ENCODE measurements at regions of chr19 and their contacts with region 1.

Region 1: DNA sequence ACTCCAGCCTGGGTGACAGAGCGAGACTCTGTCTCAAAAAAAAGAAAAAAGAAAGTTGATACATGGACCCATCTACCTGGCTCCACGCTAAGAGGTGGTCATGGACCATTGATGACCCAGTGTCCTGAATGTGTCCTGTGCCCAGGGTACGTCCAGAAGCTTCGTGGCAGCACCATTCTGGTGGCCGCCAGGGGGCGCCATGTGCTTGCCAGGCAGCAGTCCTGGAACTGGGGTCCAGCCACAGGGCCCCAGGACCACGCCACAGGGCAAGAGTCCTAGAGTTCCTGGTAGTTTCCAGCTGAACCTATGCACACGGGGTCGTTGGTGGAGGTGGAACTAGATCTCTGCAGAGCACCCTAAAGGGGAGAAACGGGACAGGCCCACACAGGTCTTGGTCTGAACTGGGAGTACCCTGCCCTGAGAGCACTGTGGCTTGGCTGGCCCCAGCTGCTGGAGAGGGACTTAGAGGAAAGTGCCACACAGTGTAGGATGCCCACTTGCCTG is 19.9 kb upstream of the FBXO27 start:
- DNase-seq: peak; percentile 90
- ATAC-seq: peak; percentile 91
- H3K4me3 ChIP-seq: no peak overlapping the region
- H3K27ac ChIP-seq: peak overlapping the region; percentile 4; the same call in 1 of the 2 replicates
- H3K4me1 ChIP-seq: no peaks in the 10 kb centered on the region
- H3K27me3 ChIP-seq: no peaks in the 10 kb centered on the region
- CTCF ChIP-seq: no peak

Region 2: DNA sequence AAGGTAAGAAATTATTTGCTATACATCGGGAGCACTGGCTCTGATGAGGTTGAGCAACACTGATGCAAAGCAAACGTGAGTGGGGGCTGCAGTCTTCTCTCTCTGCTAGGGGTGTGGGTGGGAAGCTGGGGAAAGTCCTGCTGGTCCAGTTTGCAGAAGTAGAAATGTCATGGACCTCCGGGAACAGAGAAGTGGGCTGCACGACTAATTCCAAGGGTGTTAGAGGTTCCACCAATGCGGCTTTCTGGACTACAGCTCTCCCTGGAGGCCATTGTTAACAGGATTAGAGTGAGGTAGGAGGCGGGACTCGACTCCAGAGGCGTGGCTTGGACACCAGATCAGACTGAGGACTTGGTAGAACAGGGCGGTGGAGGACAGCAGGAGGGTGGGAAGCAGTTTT is 14.2 kb before region 1 on chr19:
- CTCF ChIA-PET with region 1: interaction called, 21 read pairs
- POLR2A ChIA-PET with region 1: interaction called, 3 read pairs
- in situ Hi-C with region 1: no loop called
- intact Hi-C with region 1: no loop called
- DNase-seq: no peak
- ATAC-seq: peak; percentile 96
- H3K4me3 ChIP-seq: peak overlapping the region in 1 of 2 experiments; percentile 5; a peak in 2 of 4 replicates
- H3K27ac ChIP-seq: peak overlapping the region; percentile 3; the same call in 1 of the 2 replicates
- H3K4me1 ChIP-seq: peaks cover 11% of the 10 kb centered on the region
- H3K27me3 ChIP-seq: no peaks in the 10 kb centered on the region
- CTCF ChIP-seq: no peak

Region 3: GRCh38 chr19:39070888-39071287 is 18.6 kb after region 1 on chr19:
- CTCF ChIA-PET with region 1: interaction called, 15 read pairs
- POLR2A ChIA-PET with region 1: interaction called, 4 read pairs
- in situ Hi-C with region 1: no loop called
- intact Hi-C with region 1: no loop called
- DNase-seq: no peak
- ATAC-seq: peak; percentile 37
- H3K4me3 ChIP-seq: no peak overlapping the region
- H3K27ac ChIP-seq: peak overlapping the region; percentile 24
- H3K4me1 ChIP-seq: peaks cover 32% of the 10 kb centered on the region
- H3K27me3 ChIP-seq: no peaks in the 10 kb centered on the region
- CTCF ChIP-seq: no peak

Region 4: GRCh38 chr19:39078436-39079200 is 26.3 kb after region 1 on chr19:
- CTCF ChIA-PET with region 1: interaction called, 15 read pairs
- POLR2A ChIA-PET with region 1: no interaction called
- in situ Hi-C with region 1: no loop called
- intact Hi-C with region 1: no loop called
- DNase-seq: peak; percentile 100
- ATAC-seq: peak; percentile 86
- H3K4me3 ChIP-seq: peak overlapping the region in 1 of 2 experiments; percentile 2; a peak in 1 of 4 replicates
- H3K27ac ChIP-seq: peak overlapping the region; percentile 75
- H3K4me1 ChIP-seq: peaks cover 73% of the 10 kb centered on the region
- H3K27me3 ChIP-seq: no peaks in the 10 kb centered on the region
- CTCF ChIP-seq: no peak

Region 5: GRCh38 chr19:39144245-39145071 is 92.2 kb after region 1 on chr19:
- CTCF ChIA-PET with region 1: no interaction called
- POLR2A ChIA-PET with region 1: no interaction called
- in situ Hi-C with region 1: no loop called
- intact Hi-C with region 1: no loop called
- DNase-seq: no peak
- ATAC-seq: peak; percentile 64
- H3K4me3 ChIP-seq: no peak overlapping the region
- H3K27ac ChIP-seq: peak overlapping the region; percentile 0; the same call in 1 of the 2 replicates
- H3K4me1 ChIP-seq: peaks cover 31% of the 10 kb centered on the region
- H3K27me3 ChIP-seq: no peaks in the 10 kb centered on the region
- CTCF ChIP-seq: no peak

Region 6: GRCh38 chr19:39187559-39187957 is 135.3 kb after region 1 on chr19:
- CTCF ChIA-PET with region 1: no interaction called
- POLR2A ChIA-PET with region 1: no interaction called
- in situ Hi-C with region 1: no loop called
- intact Hi-C with region 1: loop called (anchors 5 kb)
- DNase-seq: no peak
- ATAC-seq: peak; percentile 40
- H3K4me3 ChIP-seq: no peak overlapping the region
- H3K27ac ChIP-seq: no peak overlapping the region
- H3K4me1 ChIP-seq: no peaks in the 10 kb centered on the region; the same call in 1 of the 2 replicates
- H3K27me3 ChIP-seq: no peaks in the 10 kb centered on the region
- CTCF ChIP-seq: no peak